SK-N-SH (cell line): ENCODE measurements at regions of chr7 and their contacts with region 1.

Region 1: DNA sequence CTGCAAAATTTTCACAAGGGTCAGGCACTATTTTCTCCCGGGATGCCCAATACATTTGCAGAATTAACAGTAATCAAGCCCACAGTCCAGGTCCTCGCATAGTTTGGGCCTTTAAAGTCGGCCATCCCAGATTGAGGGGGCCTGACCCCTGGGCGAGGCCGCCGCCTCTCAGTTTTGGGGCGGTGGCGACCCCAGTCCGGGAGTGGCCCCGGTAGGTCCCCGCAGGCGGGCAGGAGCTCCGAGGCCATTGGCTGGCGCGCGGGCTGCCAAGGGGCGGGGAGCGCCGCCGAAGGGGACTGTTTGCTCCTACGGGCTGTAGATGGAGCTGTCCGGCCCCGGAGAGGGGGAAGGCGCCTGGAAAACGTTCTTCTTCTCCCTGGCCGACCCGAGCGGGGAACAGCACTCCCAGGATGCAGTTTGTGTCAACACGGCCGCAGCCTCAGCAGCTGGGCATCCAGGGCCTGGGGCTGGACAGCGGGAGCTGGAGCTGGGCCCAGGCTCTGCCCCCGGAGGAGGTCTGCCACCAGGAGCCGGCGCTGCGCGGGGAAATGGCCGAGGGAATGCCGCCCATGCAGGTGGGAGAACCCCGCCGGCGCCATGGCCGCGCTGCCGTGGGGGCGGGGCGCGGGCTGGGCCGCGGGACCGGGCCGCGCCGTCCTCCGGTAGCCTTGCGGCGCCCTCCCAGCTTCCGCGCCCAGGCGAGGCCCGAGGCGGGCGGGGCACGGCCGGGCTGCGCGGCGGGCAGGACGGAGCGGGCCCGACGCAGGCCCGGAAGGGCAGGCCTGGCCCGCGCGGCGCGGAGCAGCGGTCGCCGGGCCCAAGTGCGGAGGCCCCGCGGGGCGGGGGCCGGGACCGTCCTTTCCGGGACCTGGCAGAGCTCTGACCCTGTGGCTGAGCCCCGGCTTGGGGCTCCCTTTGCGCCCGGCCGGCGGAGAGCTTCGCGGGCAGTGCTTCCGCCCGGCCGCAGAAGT is at the start of gene ZNF282:
- DNase-seq: peak; percentile 100
- H3K4me3 ChIP-seq: peak within 1 kb of the TSS; percentile 90 to 91
- H3K27ac ChIP-seq: peak within 1 kb of the TSS; percentile 76 to 93
- H3K4me1 ChIP-seq: peaks cover 13 to 15% of the 10 kb centered on the region in 2 experiments; a peak in 2 of 4 replicates
- H3K27me3 ChIP-seq: no peaks in the 10 kb centered on the region; the same call in 1 of the 2 replicates
- CTCF ChIP-seq: peak; percentile 77
- EP300 ChIP-seq: peak in 1 of 2 experiments; percentile 65; a peak in 1 of 4 replicates
- RAD21 ChIP-seq: peak; percentile 56
- polyA plus RNA-seq, gene ZNF282: 15.0 and 17.9 TPM in 2 replicates

Region 2: DNA sequence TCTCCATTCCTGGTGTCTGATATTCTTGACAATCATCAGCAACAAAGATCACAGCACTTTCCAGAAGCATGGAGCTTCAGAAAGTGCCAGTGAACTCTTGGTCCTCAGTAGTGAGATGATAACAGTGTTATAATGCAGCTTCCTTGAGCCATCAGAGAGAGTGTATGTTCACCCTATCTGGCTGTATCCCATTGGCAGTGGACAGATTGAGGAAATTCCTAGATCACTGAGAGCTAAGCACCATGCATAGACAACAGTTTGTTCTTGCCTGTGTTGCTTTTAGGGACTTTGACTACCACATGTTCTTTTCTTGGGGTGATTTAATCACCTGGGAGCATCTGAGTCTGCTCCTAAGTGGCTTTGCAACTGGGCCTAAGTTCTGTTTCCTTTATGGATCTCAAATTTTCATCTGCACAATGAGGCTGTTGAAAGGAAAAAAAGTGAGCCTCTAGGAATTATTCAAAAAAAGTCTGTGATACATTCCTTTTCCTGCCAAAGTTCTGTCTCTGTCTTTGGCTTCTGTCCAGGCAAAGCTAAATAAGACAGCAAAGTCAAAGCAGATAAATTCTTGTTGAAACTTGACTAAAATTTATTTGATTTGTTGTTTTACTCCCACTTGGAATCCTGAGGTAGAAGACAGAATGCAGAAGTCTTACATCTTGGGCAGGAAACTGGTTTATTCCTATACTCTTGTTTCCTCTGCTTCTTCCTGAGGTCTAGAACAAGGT is 14.6 kb before region 1 on chr7:
- CTCF ChIA-PET with region 1: interaction called, 28 read pairs
- POLR2A ChIA-PET with region 1: interaction called, 5 read pairs
- DNase-seq: no peak
- H3K4me3 ChIP-seq: no peak overlapping the region
- H3K27ac ChIP-seq: peak overlapping the region; percentile 17 to 68; a peak in 3 of 4 replicates
- H3K4me1 ChIP-seq: no peaks in the 10 kb centered on the region; a peak in 2 of 4 replicates
- H3K27me3 ChIP-seq: no peaks in the 10 kb centered on the region
- CTCF ChIP-seq: no peak
- EP300 ChIP-seq: no peak
- RAD21 ChIP-seq: no peak

Region 3: DNA sequence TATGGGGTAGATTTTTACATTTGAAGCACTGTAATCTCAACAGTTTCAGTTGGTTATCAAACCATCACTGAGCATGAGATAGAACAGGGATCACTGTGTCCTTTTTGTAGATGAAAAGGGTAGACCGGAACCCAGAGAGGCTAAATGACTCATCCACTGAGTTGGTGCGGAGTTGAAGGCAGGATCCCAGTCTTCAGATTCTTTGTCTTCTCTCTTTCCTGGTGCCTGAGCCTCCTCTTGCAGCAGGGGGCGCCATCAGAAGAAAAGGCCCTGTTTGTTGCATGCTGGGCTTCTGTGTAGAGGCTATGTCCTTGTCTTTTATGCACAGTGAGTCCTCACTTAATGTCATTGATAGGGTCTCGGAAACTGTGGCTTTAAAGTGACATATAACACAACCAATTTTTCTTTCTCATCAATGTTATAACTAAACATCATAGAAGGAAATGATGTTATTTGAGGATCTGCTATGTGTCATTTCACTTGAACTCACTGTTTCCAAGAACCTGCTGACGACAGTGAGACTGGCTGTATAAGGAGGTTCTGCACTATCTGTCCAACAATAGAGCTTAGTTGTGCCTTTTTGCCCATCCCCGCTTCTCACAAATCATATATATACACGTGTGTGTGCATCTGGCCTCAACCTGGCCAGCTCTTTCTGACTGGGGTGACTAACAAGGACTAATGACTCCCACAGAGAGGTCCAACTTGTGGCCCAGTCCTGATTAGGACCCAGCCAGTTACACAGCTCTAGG is 14.2 kb after region 1 on chr7:
- CTCF ChIA-PET with region 1: interaction called, 13 read pairs
- POLR2A ChIA-PET with region 1: interaction called, 6 read pairs
- DNase-seq: peak; percentile 83
- H3K4me3 ChIP-seq: no peak overlapping the region
- H3K27ac ChIP-seq: peak overlapping the region in 1 of 2 experiments; percentile 61; a peak in 2 of 4 replicates
- H3K4me1 ChIP-seq: peaks cover 0 to 5% of the 10 kb centered on the region in 2 experiments; a peak in 1 of 4 replicates
- H3K27me3 ChIP-seq: no peaks in the 10 kb centered on the region
- CTCF ChIP-seq: peak; percentile 98
- EP300 ChIP-seq: no peak
- RAD21 ChIP-seq: peak; percentile 53

Region 4: DNA sequence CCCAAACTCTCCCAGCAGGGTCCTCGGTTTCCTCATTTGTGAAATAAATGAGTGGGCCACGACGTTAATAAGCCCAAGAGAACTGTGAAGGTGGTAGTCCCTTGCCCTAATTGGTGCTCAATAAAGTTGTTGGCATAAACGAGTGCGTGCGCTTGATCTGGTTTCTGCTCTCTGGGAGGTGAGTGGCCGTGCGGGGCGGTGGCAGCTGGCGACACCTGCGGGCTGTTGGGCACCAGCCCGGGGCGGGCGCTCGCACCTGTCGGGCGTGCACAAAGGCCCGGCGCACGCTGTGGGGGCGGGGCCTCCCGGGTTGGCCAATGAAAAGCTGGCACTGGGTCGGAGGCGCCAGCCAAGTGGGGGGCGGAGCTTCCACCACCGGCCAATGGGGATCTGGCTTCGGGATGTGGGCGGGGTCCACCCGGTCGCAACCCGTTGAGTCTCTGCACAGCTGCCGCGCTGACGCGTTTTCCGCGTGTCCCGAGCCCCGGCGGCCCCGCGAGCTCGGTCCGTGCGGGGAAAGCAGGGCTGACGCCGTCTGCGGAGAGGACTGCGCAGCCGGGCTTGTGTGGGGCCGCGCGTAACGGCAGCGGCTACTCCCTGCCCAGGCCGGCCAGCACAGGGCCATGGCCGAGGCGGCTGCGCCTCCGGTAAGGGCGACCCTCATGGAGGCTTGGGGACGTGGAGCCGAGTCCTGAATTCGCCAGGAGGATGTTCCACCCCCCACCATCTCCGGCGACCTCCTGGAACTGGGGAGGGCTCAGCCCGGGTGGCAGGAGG is 89.6 kb after region 1 on chr7:
- CTCF ChIA-PET with region 1: no interaction called
- POLR2A ChIA-PET with region 1: no interaction called
- DNase-seq: peak; percentile 100
- H3K4me3 ChIP-seq: peak overlapping the region; percentile 74 to 78
- H3K27ac ChIP-seq: no peak overlapping the region
- H3K4me1 ChIP-seq: peaks cover 0 to 16% of the 10 kb centered on the region in 2 experiments; a peak in 1 of 4 replicates
- H3K27me3 ChIP-seq: no peaks in the 10 kb centered on the region
- CTCF ChIP-seq: no peak
- EP300 ChIP-seq: no peak
- RAD21 ChIP-seq: no peak